GM13976 (cell line): ENCODE measurements at regions of chr12 and their contacts with region 1.

Region 1: GRCh38 chr12:91811481-91812287 is 334.0 kb downstream of the BTG1 start:
- DNase-seq: peak; percentile 26
- CTCF ChIP-seq: peak; percentile 54

Region 2: DNA sequence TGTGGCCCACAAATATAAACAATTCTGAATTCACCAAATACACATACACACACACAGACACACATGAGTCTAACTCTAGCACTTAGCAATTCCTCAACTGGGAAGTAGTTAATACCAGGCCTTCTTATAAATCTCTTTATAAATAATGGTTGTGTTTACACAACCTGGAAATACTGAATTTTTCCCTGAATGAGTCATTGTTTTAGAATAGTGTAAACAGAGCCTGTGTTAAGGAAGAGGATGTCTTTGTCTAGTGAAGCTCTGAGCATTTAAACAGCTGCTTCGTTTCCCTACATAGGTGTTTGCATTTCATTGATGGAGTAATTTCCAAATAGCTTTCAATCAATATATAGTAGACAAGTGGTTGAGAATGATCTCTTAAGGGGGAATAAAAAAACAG is 115.2 kb after region 1 on chr12:
- in situ Hi-C with region 1: no loop called
- DNase-seq: no peak
- CTCF ChIP-seq: no peak

Region 3: GRCh38 chr12:92136965-92137721 is 325.5 kb after region 1 on chr12:
- in situ Hi-C with region 1: loop called (anchors 10 kb)
- DNase-seq: no peak
- CTCF ChIP-seq: no peak